ENCODE measurements at regions of chr9 and their contacts with region 1.

Region 1: GRCh38 chr9:100674419-100675122 is 96.7 kb downstream of the CAVIN4 start:
- DNase-seq: no peak
- ATAC-seq: no peak
- H3K4me3 ChIP-seq: no peak overlapping the region
- H3K27ac ChIP-seq: no peak overlapping the region
- H3K4me1 ChIP-seq: no peaks in the 10 kb centered on the region
- H3K27me3 ChIP-seq: no peaks in the 10 kb centered on the region; a peak in 1 of 4 replicates
- CTCF ChIP-seq: no peak
- EP300 ChIP-seq: no peak
- POLR2A ChIP-seq: no peak
- RAD21 ChIP-seq: no peak

Region 2: DNA sequence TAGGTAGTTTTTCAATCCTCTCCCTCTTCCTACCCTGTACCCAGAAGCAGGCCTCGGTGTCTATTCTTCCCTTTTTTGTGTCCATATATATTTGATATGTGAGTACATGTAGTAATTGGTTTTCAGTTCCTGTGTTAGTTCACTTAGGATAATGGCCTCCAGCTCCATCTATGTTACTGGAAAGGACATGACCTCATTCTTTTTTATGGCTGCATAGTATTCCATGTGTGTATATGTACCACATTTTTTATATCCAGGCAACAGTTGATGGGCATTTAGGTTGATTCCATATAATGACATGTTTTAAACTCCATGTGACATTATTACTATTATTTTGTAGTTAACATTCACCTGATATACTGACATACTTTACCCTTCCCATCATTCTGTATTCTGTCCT is 47.6 kb before region 1 on chr9:
- CTCF ChIA-PET with region 1: no interaction called
- POLR2A ChIA-PET with region 1: no interaction called
- RAD21 ChIA-PET with region 1: no interaction called
- SMC1A ChIA-PET with region 1: no interaction called
- in situ Hi-C with region 1: no loop called
- intact Hi-C with region 1: loop called (anchors 5 kb)
- DNase-seq: no peak
- ATAC-seq: no peak
- H3K4me3 ChIP-seq: no peak overlapping the region
- H3K27ac ChIP-seq: no peak overlapping the region
- H3K4me1 ChIP-seq: no peaks in the 10 kb centered on the region
- H3K27me3 ChIP-seq: no peaks in the 10 kb centered on the region
- CTCF ChIP-seq: no peak
- EP300 ChIP-seq: no peak
- POLR2A ChIP-seq: no peak
- RAD21 ChIP-seq: no peak

Measured in GM12878 (cell line).